Sigmoid colon (tissue), 7 donors: ENCODE measurements at regions of chr3 and their contacts with region 1.

Region 1: DNA sequence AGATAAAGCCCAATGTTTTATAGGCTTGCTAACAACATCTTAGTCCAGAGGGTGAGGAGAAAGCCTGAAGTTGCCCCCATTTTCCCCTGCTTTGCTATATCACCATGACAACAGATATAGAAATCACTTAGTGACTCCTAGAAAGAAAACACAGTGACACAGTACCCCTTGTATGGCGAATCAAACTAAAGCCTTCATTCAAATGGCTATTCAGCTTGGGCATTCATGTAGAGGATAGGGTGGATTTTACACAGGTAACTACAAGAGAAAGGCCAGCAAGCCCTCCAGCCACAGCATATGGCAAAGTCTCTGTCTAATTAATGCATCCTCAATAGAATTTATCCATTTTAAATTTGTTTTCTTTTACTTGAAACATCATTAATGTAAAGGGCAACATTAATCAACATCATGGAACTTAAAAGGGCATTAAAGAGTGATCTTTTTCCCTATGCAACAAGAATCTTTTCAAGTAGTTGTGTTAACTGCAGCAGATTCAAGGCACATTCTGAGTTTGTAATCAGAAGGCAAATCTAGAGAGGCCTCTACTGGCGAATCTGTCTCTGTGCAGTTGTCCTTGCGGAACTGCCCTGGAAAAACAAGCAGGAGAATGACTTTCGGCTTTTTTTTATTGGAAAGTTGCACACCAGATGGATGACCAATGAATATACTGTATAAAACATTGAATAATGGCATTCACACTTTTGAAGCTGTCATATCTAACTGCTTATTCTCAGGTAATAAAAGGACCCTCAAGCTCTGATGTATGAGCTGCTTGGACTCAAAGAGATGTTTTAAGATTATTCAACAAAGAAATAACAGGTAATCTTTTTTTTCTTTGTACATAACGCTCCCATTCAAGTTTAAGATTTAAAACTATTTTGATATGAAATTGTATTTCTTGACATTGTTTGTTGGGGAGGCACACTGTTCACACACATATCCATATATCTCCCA is 621.7 kb upstream of the AGTR1 start:
- DNase-seq: no peak
- H3K4me3 ChIP-seq: no peak overlapping the region
- H3K27ac ChIP-seq: peak overlapping the region in 1 of 4 donors; percentile 20
- H3K4me1 ChIP-seq: peaks cover 0 to 52% (median 25%) of the 10 kb centered on the region in 4 donors
- H3K27me3 ChIP-seq: no peaks in the 10 kb centered on the region
- CTCF ChIP-seq: peak; percentile 40 to 71 (median 50)
- EP300 ChIP-seq: no peak
- POLR2A ChIP-seq: no peak

Region 2: DNA sequence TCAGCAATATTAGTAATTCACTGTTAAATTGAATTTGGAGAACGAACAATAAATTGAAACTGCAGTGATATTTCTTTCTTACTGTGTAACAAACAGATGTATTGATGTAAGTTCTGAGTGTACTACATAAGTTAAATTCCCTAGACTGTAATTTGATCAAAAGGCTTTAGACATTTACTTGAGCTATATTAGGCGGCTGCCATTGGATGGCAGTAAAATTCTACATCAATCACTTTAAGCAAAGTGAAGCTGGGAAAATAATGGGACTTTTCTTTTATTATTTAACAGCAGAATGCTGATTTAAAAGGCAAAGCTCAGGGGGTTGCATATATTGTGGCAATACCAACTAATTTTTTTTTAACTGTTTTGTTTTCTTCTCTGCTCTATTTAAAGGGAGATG is 1258.3 kb before region 1 on chr3:
- intact Hi-C with region 1: loop called (anchors 10 kb)
- DNase-seq: no peak
- H3K4me3 ChIP-seq: no peak overlapping the region
- H3K27ac ChIP-seq: no peak overlapping the region
- H3K4me1 ChIP-seq: peaks cover 0 to 11% (median 5%) of the 10 kb centered on the region in 4 donors
- H3K27me3 ChIP-seq: no peaks in the 10 kb centered on the region
- CTCF ChIP-seq: peak in 1 of 4 experiments; percentile 24
- EP300 ChIP-seq: no peak
- POLR2A ChIP-seq: no peak

Region 3: GRCh38 chr3:147119989-147120388 is 956.1 kb before region 1 on chr3:
- intact Hi-C with region 1: loop called (anchors 5 kb)
- DNase-seq: no peak
- H3K4me3 ChIP-seq: no peak overlapping the region
- H3K27ac ChIP-seq: no peak overlapping the region
- H3K4me1 ChIP-seq: peaks cover 0 to 25% (median 2%) of the 10 kb centered on the region in 4 donors
- H3K27me3 ChIP-seq: no peaks in the 10 kb centered on the region
- CTCF ChIP-seq: peak in 1 of 4 experiments; percentile 29
- EP300 ChIP-seq: no peak
- POLR2A ChIP-seq: no peak

Region 4: DNA sequence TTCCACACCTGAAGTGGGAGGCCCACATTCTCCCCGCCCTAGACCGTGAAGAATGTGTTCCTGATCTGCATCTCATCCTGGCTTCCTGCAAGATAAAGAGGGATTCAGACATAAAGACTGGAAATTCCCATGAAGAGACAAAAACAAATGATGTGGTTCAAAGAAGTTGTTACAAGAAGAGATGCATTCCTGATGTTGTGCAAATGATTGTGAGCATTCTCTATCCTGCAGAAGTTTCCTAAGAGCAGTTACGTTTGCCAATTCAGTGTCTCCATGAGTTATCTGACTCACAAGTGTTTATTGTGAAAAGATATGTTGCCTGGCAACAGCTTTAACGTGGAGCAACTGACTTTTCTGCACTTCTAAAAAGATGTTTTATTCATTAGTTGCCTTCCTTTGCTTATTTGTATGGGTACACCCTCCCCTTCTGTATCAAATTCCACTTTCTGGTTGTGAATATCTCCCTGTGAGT is 777.5 kb before region 1 on chr3:
- intact Hi-C with region 1: loop called (anchors 10 kb)
- DNase-seq: no peak
- H3K4me3 ChIP-seq: no peak overlapping the region
- H3K27ac ChIP-seq: peak overlapping the region in 2 of 4 donors; percentile 37 to 45
- H3K4me1 ChIP-seq: peaks cover 0 to 20% (median 16%) of the 10 kb centered on the region in 4 donors
- H3K27me3 ChIP-seq: no peaks in the 10 kb centered on the region
- CTCF ChIP-seq: no peak
- EP300 ChIP-seq: peak in 1 of 4 donors; percentile 6
- POLR2A ChIP-seq: no peak

Region 5: GRCh38 chr3:147418808-147419701 is 657.0 kb before region 1 on chr3:
- intact Hi-C with region 1: loop called (anchors 10 kb)
- DNase-seq: no peak
- H3K4me3 ChIP-seq: peak overlapping the region in 2 of 4 donors; percentile 2 to 28
- H3K27ac ChIP-seq: no peak overlapping the region
- H3K4me1 ChIP-seq: peaks cover 0 to 34% (median 25%) of the 10 kb centered on the region in 4 donors
- H3K27me3 ChIP-seq: peaks cover 74 to 100% (median 96%) of the 10 kb centered on the region in 3 donors
- CTCF ChIP-seq: no peak
- EP300 ChIP-seq: no peak
- POLR2A ChIP-seq: no peak

Region 6: DNA sequence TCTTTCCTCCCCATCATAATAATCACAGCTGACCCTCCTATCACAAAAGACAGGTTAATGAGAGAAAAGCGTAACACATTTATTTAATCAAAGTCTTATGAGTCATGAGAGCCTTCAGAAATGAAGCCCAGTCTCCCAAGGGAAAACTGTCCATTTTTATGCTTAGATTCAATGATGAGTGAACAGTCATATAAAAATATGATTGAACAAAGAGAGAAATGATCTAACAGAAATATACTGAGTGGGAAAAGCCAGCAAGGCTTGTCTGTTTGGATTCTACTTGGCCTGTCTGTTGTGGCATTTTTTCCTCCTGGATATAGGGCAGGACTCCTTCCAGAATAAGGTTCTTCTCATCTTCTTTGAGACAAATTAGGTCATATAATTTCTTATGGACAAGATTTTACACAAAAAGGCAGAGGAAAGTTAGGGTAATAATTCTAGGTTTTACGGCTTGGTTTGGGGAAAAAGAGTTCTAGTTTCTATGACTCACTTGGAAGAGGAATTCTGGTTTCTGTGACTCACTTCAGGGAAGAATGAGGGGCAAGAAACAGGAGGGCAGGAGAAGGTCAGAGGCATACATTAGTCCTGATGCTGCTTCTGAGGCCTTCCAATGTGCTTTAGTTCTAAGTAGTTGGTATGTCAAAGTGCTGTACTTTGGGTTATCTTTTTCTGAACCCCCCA is 132.6 kb before region 1 on chr3:
- intact Hi-C with region 1: loop called (anchors 5 kb)
- DNase-seq: no peak
- H3K4me3 ChIP-seq: no peak overlapping the region
- H3K27ac ChIP-seq: peak overlapping the region in 3 of 4 donors; percentile 18 to 60 (median 52)
- H3K4me1 ChIP-seq: peaks cover 0 to 18% (median 10%) of the 10 kb centered on the region in 4 donors
- H3K27me3 ChIP-seq: no peaks in the 10 kb centered on the region
- CTCF ChIP-seq: no peak
- EP300 ChIP-seq: no peak
- POLR2A ChIP-seq: no peak